GM10248 (cell line): ENCODE measurements at regions of chr14 and their contacts with region 1.

Region 1: DNA sequence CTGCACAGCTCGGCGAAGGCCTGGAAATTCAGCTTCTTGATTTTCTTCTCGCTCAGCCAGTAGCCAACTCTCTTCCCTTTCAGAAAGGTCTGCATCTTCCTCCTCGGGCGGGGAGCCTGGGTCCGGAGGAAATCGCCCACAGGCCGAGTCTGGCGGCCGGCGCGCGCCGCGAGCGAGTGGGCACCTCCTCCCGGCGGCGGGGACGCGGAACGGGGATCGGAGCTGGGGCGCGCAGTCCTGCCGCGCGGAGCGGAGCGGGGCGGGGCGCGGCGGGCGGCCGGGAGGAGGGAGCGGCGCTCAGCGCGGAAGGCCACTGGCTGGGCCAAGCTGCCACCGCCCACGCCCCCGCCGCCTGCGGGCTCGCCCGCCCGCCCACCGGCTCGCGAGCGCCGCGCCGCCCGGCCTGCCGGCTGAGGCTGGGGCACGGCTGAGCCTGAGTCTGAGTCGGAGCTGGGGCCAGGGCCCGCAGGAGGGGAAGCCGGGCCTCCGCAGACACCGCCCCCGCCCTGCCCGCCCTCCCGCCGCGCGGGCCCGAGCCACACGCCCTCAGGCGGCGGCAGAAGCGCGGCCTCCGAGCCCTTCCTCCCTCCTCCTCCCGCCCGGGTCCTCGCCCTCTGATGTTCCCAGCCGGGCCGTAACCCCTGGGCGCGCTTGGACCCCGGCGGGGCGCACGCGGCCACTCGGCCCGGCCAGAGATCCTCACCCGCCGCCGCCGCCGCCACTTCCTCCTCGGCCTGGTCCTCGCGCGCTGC is 480 bp downstream of the ITPK1 start:
- DNase-seq: peak; percentile 88
- CTCF ChIP-seq: no peak

Region 2: GRCh38 chr14:92748259-92749016 is 366.8 kb before region 1 on chr14 and contains the start of gene LGMN:
- CTCF ChIA-PET with region 1: no interaction called
- POLR2A ChIA-PET with region 1: no interaction called
- DNase-seq: peak; percentile 93
- CTCF ChIP-seq: no peak

Region 3: DNA sequence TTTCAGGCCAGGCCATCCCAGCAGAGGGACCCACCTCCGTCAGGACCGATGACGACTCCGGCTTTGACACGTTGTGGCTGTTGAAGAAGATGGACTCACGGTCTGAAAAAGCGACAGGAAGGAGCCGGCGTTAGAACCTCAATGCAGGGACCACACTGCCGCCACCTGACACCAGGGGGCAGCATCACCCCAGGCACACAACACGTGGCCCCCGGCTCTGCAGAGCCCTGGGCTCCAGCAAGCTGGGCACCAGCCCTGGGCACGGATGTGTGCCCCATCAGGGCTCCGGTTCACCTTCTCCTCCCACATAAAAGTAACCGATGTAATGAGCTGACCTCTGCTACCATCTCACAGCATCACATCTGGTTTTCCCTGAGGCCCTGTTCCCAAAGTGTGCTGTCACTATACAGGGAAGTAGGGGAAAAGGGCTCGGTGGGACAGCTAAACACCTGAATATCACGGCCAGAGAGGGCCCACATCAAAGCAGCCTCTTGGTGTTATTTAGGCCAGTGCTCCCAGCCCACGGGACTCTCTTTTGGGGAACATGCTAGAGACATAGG is 163.3 kb before region 1 on chr14:
- CTCF ChIA-PET with region 1: interaction called, 56 read pairs
- POLR2A ChIA-PET with region 1: interaction called, 6 read pairs
- DNase-seq: peak; percentile 92
- CTCF ChIP-seq: peak; percentile 85

Region 4: DNA sequence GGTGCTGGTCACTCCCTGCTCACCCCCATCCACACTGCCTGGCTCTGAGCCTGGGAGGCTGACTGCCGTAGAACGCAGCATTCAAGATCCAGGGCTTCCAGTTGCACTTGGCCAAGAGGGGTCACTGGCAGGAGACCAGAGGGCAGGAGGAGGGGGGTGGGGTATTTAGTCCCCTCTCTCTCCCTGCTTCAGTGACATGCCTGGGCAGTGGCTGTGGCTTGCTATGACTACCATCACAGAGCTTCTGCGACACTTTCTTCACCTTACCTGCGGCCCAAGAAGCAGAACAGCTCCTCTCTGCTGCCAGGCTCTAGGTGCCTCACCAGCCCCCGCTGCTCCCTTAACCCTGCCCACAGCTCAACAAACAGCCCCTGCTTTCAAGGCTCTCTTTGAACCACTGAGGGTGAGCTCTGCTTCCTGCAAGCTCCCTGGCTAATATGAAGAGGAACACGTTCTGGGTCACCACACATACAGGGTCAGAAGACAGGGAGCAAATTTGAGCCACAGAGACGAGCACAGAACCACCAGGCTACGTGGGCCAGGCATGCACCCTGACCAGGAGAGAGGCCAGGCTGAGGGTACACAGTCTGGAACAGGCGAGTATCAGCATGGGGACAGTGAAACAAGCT is 55.2 kb before region 1 on chr14:
- CTCF ChIA-PET with region 1: interaction called, 33 read pairs
- POLR2A ChIA-PET with region 1: no interaction called
- DNase-seq: no peak
- CTCF ChIP-seq: no peak

Region 5: GRCh38 chr14:93103392-93104080 is 11.7 kb before region 1 on chr14:
- CTCF ChIA-PET with region 1: interaction called, 86 read pairs
- POLR2A ChIA-PET with region 1: interaction called, 3 read pairs
- DNase-seq: peak; percentile 80
- CTCF ChIP-seq: no peak

Region 6: GRCh38 chr14:93173943-93174395 is 58.7 kb after region 1 on chr14:
- CTCF ChIA-PET with region 1: interaction called, 18 read pairs
- POLR2A ChIA-PET with region 1: no interaction called
- DNase-seq: no peak
- CTCF ChIP-seq: no peak

Region 7: DNA sequence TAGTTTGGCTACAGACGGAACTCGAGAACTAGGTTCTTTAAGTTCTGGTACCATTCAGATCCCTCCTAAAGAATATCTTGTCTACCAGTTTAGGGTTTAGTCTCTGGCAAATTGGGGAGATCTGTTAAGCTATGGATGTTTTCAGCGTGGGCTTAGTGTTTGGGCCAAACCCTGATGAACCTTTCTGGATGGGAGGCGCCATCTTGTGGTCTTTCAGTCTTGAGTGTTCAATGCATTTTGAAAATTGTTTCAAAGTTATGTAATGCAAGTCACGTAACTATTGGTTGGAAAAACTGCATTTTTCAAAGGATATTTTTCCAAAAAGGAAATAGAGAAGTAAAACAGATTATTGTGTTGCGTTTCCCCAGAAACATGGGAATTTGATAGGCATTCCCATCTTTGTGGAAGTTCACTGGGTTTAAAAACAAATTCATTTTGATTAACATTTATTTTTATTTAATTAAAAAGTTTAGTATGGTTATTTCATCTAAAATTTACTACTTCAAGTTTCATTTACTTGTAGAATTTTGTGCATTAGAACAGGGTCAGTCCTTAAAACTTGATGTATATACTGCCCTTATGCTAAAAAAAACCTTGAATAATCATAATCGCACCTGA is 504.0 kb after region 1 on chr14:
- CTCF ChIA-PET with region 1: interaction called, 14 read pairs
- POLR2A ChIA-PET with region 1: no interaction called
- DNase-seq: peak; percentile 49
- CTCF ChIP-seq: peak; percentile 63